ENCODE measurements at regions of chr21 and their contacts with region 1.

Region 1: DNA sequence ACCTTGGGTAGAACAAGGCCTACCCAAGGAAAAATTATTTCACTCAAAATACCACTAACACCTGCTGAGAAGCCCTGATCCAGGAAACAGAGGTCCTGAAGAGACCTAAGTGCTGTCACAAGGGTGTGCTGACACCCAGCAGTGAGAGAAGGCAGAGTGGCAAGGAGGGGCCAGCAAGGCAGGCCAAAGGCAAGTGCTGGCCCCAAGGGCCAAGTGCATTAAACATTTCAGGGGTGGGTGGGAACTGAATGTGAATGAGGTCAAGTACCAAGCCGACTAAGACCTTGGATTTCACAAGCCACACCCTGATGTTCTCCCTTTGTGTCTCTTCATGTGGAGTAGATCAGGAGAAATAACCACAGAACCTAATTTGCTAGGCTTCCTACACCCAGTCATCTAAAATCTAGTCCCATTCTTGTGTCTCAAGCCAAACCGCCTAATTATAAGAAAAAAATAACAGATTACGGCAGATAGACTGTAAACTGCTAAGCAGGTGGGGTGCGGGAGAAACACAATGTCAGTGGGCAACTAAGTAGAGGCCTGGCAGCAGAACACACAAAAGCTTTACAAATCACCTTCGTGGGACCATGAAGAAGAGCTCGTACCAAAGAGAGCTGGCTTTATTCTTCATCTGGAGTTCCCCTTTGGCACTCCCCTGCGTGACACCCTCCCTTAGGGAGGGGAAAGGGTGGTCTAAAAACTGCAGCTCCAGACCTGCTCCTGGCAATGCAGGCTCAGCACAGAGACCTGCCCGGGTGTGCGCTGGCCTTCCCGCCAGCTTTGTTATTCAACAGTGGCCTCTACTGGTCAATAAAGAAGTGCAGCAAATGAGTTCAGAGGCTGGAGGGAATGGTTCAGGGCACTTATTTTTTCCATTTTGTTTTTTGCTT is 8.7 kb downstream of the UBE2G2 start:
- DNase-seq: peak; percentile 57
- ATAC-seq: peak; percentile 95
- H3K4me3 ChIP-seq: no peak overlapping the region
- H3K27ac ChIP-seq: no peak overlapping the region
- H3K4me1 ChIP-seq: peaks cover 48% of the 10 kb centered on the region
- H3K27me3 ChIP-seq: no peaks in the 10 kb centered on the region
- CTCF ChIP-seq: peak; percentile 87
- EP300 ChIP-seq: no peak
- POLR2A ChIP-seq: no peak
- RAD21 ChIP-seq: peak; percentile 89

Region 2: DNA sequence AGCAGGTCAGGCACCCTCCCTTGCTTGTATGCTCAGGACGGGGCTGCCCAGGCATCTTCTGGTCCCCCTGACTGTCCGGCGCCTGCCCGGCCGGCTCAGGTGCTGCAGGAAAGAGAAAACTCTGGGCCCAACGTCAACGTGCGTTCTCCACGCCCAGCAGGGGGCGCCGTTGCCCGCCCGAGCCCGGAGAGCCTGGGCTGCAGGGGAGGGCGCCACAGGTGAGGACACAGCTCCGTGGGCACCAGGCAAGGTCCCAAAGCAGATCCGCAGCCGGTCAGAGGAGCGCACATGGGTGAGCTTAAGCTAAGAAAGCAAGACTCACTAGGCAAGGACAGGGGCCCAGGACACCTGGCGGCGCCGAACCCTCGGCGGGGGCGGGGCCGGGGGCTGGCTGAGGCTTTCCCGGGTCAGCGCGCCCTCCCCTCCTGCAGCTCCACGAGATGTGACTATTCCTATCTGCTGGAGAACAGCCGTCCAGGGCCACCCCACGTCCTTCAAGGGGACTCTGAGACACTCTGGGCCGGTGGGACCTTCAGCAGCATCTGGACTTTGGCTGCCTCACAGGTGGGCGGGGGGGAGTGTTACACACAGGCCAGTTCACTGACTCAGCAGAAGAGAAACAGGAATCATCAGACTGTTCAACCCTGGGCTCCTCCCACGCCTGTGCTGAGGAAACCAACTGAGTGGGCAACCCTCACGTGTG is 282.3 kb before region 1 on chr21:
- CTCF ChIA-PET with region 1: interaction called, 14 read pairs
- POLR2A ChIA-PET with region 1: interaction called, 4 read pairs
- in situ Hi-C with region 1: no loop called
- intact Hi-C with region 1: loop called (anchors 2 kb)
- DNase-seq: peak; percentile 57
- ATAC-seq: peak; percentile 47
- H3K4me3 ChIP-seq: peak overlapping the region in 1 of 3 experiments; percentile 23; a peak in 1 of 6 replicates
- H3K27ac ChIP-seq: peak overlapping the region; percentile 45
- H3K4me1 ChIP-seq: peaks cover 63% of the 10 kb centered on the region
- H3K27me3 ChIP-seq: no peaks in the 10 kb centered on the region; a peak in 1 of 5 replicates
- CTCF ChIP-seq: peak; percentile 98
- EP300 ChIP-seq: no peak
- POLR2A ChIP-seq: no peak
- RAD21 ChIP-seq: peak; percentile 95

Region 3: GRCh38 chr21:44618504-44618903 is 174.4 kb before region 1 on chr21:
- CTCF ChIA-PET with region 1: no interaction called
- POLR2A ChIA-PET with region 1: no interaction called
- in situ Hi-C with region 1: no loop called
- intact Hi-C with region 1: loop called (anchors 2 kb)
- DNase-seq: peak; percentile 16
- ATAC-seq: peak; percentile 88
- H3K4me3 ChIP-seq: no peak overlapping the region
- H3K27ac ChIP-seq: no peak overlapping the region
- H3K4me1 ChIP-seq: no peaks in the 10 kb centered on the region
- H3K27me3 ChIP-seq: peaks cover 1 to 28% of the 10 kb centered on the region in 2 experiments; a peak in 3 of 5 replicates
- CTCF ChIP-seq: peak; percentile 68
- EP300 ChIP-seq: no peak
- POLR2A ChIP-seq: no peak
- RAD21 ChIP-seq: no peak

Region 4: GRCh38 chr21:44737706-44738354 is 55.1 kb before region 1 on chr21:
- CTCF ChIA-PET with region 1: no interaction called
- POLR2A ChIA-PET with region 1: no interaction called
- in situ Hi-C with region 1: no loop called
- intact Hi-C with region 1: no loop called
- DNase-seq: no peak
- ATAC-seq: no peak
- H3K4me3 ChIP-seq: no peak overlapping the region
- H3K27ac ChIP-seq: no peak overlapping the region
- H3K4me1 ChIP-seq: peaks cover 43% of the 10 kb centered on the region
- H3K27me3 ChIP-seq: peaks cover 5 to 21% of the 10 kb centered on the region in 2 experiments
- CTCF ChIP-seq: no peak
- EP300 ChIP-seq: no peak
- POLR2A ChIP-seq: no peak
- RAD21 ChIP-seq: no peak

Region 5: GRCh38 chr21:44755227-44755626 is 37.7 kb before region 1 on chr21:
- CTCF ChIA-PET with region 1: interaction called, 3 read pairs
- POLR2A ChIA-PET with region 1: no interaction called
- in situ Hi-C with region 1: no loop called
- intact Hi-C with region 1: loop called (anchors 1 kb)
- DNase-seq: peak; percentile 16
- ATAC-seq: no peak
- H3K4me3 ChIP-seq: no peak overlapping the region
- H3K27ac ChIP-seq: no peak overlapping the region
- H3K4me1 ChIP-seq: 0 out of 2 replicates have a peak, but pooled peaks cover under 1% of the 10 kb centered on the region
- H3K27me3 ChIP-seq: peaks cover 9 to 53% of the 10 kb centered on the region in 2 experiments
- CTCF ChIP-seq: peak; percentile 41
- EP300 ChIP-seq: no peak
- POLR2A ChIP-seq: no peak
- RAD21 ChIP-seq: no peak